WTC11 (cell line): ENCODE measurements at regions of chr18 and their contacts with region 1.

Region 1: DNA sequence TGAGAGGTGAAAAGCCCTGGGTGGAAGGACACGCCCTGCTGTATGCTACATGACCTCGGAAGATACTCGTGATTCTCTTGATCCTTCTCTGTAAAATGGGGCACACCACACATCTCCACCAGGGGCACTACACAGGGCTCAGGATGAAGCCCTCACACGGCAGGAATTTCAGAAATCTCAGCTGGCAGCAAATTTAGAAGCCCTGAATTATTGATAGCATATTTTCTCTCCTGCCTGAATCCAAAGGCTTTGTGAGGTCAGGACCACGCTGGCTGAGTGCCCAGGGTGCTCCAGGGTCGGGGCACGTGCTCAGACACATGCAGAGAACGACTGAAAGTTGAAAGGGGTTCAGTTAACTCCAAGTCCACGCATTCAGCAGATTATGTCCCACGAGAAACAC is 42.1 kb upstream of the GALR1 start:
- DNase-seq: peak; percentile 53
- ATAC-seq: peak; percentile 85
- H3K4me3 Mint-ChIP-seq: no peak overlapping the region
- H3K27ac Mint-ChIP-seq: no peak overlapping the region
- H3K4me1 Mint-ChIP-seq: peaks cover 20% of the 10 kb centered on the region
- H3K27me3 Mint-ChIP-seq: no peaks in the 10 kb centered on the region
- CTCF ChIP-seq: 0 out of 2 replicates have a peak, but pooled peaks have one; percentile 41

Region 2: DNA sequence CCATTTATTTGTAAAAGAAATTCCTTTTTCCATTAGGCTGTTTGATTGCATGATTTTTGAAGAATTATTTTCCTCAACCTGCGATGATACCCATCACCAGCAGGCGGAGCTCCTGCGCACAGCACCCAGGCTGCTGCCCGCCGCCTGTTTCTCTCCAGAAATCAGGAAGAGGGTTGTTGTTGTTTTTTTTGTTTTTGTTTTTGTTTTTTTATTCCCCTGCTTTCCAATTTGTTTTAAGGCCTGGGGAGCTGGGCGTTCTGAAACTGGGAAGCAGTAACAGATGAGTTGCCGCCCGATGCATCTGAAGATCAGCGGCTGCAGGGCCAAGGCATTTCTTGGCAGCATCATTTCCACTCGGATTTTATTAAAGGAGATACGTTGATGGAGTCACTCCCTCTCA is 207.0 kb before region 1 on chr18:
- CTCF ChIA-PET with region 1: interaction called, 12 read pairs
- POLR2A ChIA-PET with region 1: no interaction called
- DNase-seq: peak; percentile 57
- ATAC-seq: no peak
- H3K4me3 Mint-ChIP-seq: no peak overlapping the region
- H3K27ac Mint-ChIP-seq: no peak overlapping the region
- H3K4me1 Mint-ChIP-seq: peaks cover 15% of the 10 kb centered on the region
- H3K27me3 Mint-ChIP-seq: no peaks in the 10 kb centered on the region
- CTCF ChIP-seq: peak; percentile 93

Region 3: GRCh38 chr18:77098029-77098428 is 109.5 kb before region 1 on chr18:
- CTCF ChIA-PET with region 1: interaction called, 14 read pairs
- POLR2A ChIA-PET with region 1: no interaction called
- DNase-seq: no peak
- ATAC-seq: no peak
- H3K4me3 Mint-ChIP-seq: peak overlapping the region; percentile 60
- H3K27ac Mint-ChIP-seq: peak overlapping the region; percentile 97
- H3K4me1 Mint-ChIP-seq: peaks cover 79% of the 10 kb centered on the region
- H3K27me3 Mint-ChIP-seq: no peaks in the 10 kb centered on the region
- CTCF ChIP-seq: no peak

Region 4: DNA sequence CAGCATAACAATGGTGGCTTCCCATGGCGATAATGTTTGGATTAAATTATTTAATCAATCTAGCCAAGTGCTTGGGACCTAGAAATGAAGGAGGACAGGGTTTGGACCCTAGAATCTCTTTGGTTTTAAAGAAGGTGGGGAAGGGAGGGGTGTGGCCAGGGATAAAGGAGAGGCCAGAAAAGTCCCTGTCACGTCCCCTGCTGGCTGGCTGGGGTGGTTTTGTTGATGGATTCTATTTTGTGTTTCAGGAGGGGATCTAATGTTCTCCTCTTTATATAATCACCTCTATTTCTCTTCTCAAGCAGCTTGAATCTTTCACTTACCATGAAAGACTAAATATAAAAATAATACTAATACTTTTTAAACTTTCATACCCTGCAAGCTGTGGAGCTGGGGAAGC is 10.5 kb before region 1 on chr18:
- CTCF ChIA-PET with region 1: interaction called, 13 read pairs
- POLR2A ChIA-PET with region 1: no interaction called
- DNase-seq: peak; percentile 45
- ATAC-seq: peak; percentile 75
- H3K4me3 Mint-ChIP-seq: no peak overlapping the region
- H3K27ac Mint-ChIP-seq: no peak overlapping the region
- H3K4me1 Mint-ChIP-seq: peaks cover 3% of the 10 kb centered on the region
- H3K27me3 Mint-ChIP-seq: no peaks in the 10 kb centered on the region
- CTCF ChIP-seq: no peak

Region 5: DNA sequence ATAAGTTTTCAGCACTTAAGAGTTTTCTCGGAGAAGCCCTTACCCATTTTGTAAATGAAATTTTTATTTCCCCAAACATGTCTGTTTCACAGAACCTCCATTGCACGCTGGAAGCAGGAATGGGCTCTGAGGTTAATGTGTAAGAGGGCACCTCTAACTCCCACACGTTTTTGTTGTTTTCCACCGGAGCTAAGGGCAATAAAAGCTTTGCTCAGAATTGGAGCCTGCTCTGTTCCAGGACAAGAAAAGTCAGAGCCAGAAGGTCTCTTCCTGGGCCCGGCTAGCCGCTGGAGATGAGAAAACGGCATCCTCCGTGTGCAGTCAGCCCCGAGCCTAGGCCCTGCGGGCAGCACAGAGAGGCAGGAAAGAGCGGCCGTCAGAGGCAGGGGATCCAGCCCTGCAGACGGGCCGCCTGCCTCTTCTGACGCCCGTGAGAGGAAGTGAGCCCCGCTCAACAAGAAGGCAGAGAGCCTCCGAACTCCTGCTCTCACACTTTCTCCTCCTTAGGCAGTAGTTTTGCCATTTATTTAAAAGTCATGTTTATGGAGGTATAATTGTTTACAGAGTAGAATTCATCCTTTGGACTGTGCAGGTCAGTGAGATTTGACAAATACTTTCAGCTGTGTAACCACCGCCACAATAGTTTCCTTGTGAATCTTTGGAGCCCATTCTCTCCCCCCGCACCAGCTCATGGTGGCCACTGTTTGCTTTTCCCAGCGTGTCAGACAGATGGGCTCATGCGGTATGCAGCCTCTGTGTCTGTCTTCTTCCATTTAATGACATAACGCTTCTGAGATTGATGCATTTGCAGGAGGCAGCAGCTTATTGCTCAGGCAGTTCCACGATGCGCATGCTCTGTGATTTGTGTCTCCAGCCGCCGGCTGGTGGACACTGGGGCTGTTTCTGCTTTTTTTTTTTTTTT is 159.4 kb after region 1 on chr18:
- CTCF ChIA-PET with region 1: no interaction called
- POLR2A ChIA-PET with region 1: no interaction called
- DNase-seq: no peak
- ATAC-seq: peak; percentile 32; the same call in 1 of the 2 replicates
- H3K4me3 Mint-ChIP-seq: no peak overlapping the region
- H3K27ac Mint-ChIP-seq: no peak overlapping the region
- H3K4me1 Mint-ChIP-seq: peaks cover 8% of the 10 kb centered on the region
- H3K27me3 Mint-ChIP-seq: peaks cover 4% of the 10 kb centered on the region; the same call in 1 of the 2 replicates
- CTCF ChIP-seq: no peak

Region 6: DNA sequence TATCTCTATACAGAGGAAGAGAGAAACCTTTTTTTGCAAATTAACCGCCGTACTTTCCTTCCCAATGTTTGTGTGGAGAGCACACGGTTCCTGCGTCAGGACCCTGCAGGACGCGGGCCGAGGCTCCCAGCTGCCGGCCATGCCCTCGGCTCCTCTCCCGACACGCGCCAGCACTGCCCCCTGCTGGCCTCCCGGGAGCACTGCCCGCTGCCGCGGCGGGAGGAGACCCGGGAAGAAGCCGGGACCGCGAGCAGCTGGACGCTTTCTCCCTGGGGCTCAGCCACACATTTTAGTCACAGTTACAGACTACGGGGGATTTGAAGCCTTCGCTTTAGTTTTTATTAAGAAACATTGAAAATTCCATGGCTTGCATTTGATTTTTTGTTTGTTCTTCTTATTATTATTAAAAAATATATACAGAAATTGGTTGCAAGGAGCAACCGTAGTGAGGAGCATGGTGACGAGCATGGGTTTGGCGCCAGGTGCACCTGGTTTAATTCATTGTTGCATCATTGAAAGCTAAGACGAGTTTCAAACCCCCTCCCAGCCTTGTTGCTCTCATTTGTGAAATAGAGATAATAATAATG is 443.4 kb after region 1 on chr18:
- CTCF ChIA-PET with region 1: interaction called, 21 read pairs
- POLR2A ChIA-PET with region 1: interaction called, 3 read pairs
- DNase-seq: peak; percentile 89
- ATAC-seq: peak; percentile 92
- H3K4me3 Mint-ChIP-seq: no peak overlapping the region
- H3K27ac Mint-ChIP-seq: no peak overlapping the region
- H3K4me1 Mint-ChIP-seq: peaks cover 12% of the 10 kb centered on the region
- H3K27me3 Mint-ChIP-seq: peaks cover 3% of the 10 kb centered on the region
- CTCF ChIP-seq: peak; percentile 96

Region 7: GRCh38 chr18:77716282-77716681 is 508.7 kb after region 1 on chr18:
- CTCF ChIA-PET with region 1: no interaction called
- POLR2A ChIA-PET with region 1: no interaction called
- DNase-seq: no peak
- ATAC-seq: no peak
- H3K4me3 Mint-ChIP-seq: no peak overlapping the region
- H3K27ac Mint-ChIP-seq: no peak overlapping the region
- H3K4me1 Mint-ChIP-seq: no peaks in the 10 kb centered on the region
- H3K27me3 Mint-ChIP-seq: no peaks in the 10 kb centered on the region; the same call in 1 of the 2 replicates
- CTCF ChIP-seq: no peak